OCI-LY7 (cell line): ENCODE measurements at regions of chr15 and their contacts with region 1.

Region 1: GRCh38 chr15:73972984-73973682 is 19.0 kb downstream of the STOML1 start:
- DNase-seq: peak; percentile 79
- H3K4me3 ChIP-seq: no peak overlapping the region
- H3K27ac ChIP-seq: no peak overlapping the region
- H3K4me1 ChIP-seq: no peaks in the 10 kb centered on the region
- CTCF ChIP-seq: peak; percentile 86

Region 2: DNA sequence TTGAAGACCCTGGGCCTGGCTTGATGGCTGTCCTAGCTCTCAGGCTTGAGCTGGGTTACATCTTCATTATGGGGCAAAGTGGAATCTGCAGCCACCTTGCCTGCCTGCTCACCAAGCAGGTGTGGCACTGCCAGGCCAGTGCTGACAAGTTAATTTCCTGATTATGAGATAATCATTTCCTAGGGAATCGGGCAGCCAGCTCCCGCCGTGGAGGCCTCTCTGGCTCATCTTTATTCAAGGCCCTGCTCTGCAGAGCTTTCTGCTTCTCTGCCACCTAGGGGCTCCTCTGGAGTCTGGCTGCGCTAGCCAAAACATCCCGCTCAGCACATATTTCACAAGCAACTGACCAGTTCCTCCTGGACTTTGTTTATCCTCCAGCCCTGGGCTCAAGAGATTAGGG is 37.0 kb before region 1 on chr15:
- CTCF ChIA-PET with region 1: no interaction called
- POLR2A ChIA-PET with region 1: no interaction called
- intact Hi-C with region 1: no loop called
- DNase-seq: no peak
- H3K4me3 ChIP-seq: no peak overlapping the region
- H3K27ac ChIP-seq: no peak overlapping the region
- H3K4me1 ChIP-seq: no peaks in the 10 kb centered on the region
- CTCF ChIP-seq: no peak

Region 3: GRCh38 chr15:73950831-73951561 is 22.1 kb before region 1 on chr15:
- CTCF ChIA-PET with region 1: interaction called, 10 read pairs
- POLR2A ChIA-PET with region 1: no interaction called
- intact Hi-C with region 1: no loop called
- DNase-seq: peak; percentile 71
- H3K4me3 ChIP-seq: no peak overlapping the region
- H3K27ac ChIP-seq: no peak overlapping the region
- H3K4me1 ChIP-seq: no peaks in the 10 kb centered on the region
- CTCF ChIP-seq: peak; percentile 73

Region 4: DNA sequence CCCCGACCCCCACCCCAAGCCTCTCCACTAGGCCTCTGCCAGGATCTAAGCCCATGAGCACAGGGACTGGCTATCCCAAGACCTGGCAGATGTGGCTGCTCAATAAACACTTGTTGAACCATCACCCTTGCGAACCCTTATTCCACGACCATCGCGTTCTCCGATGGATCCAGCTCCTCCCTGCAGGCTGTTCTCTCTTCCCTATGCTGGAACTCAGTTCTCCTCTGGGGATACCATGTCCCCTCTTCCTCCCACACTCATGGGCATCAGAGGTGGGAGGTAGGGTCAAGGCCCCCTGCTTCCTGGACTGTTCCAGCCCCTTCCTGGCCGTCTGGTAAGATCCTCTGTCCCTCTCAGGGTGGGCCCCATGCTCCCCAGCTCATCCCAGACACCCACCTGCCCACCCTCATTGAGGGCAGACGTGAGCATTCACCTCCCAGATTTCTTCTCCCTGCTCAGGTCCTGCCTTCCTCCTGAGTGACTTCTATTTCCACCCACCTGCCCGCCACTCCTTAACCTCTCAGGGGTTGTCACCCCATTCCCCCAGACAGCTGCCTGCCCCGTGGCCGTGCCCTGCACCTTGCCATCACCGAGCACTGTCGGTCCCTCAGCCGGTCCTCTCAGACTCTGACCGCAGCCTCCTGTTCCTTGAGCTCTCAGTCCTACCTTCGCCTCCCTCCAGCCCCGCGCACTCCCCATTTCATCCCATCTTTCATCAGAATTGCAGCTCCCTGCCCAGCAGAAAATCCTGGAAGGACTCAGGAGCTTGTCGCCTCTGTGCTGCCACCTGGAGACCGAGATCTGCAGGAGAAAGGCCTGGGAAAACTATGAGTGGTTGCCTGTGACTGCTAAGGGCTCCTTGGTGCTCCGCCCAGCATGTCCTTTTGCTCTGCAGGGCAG is 63.4 kb after region 1 on chr15:
- CTCF ChIA-PET with region 1: interaction called, 3 read pairs
- POLR2A ChIA-PET with region 1: interaction called, 3 read pairs
- intact Hi-C with region 1: loop called (anchors 1 kb)
- DNase-seq: peak; percentile 8
- H3K4me3 ChIP-seq: no peak overlapping the region
- H3K27ac ChIP-seq: no peak overlapping the region
- H3K4me1 ChIP-seq: no peaks in the 10 kb centered on the region
- CTCF ChIP-seq: peak; percentile 58

Region 5: GRCh38 chr15:74144153-74144775 is 171.1 kb after region 1 on chr15:
- CTCF ChIA-PET with region 1: interaction called, 10 read pairs
- POLR2A ChIA-PET with region 1: no interaction called
- intact Hi-C with region 1: no loop called
- DNase-seq: no peak
- H3K4me3 ChIP-seq: no peak overlapping the region
- H3K27ac ChIP-seq: no peak overlapping the region
- H3K4me1 ChIP-seq: no peaks in the 10 kb centered on the region
- CTCF ChIP-seq: no peak

Region 6: DNA sequence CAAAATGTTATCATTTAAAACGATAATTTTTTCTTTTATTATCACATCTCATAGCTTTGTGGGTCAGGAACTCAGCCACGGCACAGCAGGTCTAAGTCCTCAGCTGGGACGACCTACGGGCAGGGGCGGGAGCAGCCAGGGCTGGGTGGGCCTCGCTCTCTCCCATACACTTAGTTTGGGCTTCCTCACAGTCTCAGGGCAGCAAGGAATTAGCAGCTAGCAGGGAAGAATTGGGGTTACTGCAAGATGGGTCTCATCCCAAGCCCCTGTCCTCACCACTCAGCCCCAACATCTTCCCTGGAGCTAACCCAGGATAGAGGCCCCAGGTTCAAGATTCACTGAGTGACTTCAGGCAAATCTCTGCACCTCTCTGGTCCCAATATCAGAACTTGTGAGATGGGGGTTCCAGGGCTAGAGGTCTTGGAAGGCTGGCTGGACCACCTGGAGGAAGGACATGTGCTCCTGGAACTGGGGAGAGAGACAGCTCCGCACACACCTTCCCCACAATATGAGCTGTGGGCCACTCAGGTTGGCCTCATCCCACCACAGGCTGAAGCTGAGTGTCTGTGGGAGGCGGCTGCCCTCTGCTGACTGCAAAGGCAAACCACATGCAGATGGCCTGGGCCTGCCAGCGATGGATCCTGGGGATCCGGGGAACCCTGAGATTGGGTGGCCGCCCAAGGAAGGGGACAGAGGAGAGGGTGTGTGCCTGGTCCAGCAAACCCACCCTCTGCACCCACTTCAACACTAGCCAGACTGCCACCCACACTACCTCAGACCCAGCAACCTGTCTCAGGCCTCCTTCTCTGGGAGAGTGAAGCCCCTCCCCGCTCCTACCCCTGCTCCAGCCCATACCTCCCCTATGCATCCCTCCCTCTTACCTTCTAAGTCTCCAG is 349.3 kb after region 1 on chr15:
- CTCF ChIA-PET with region 1: no interaction called
- POLR2A ChIA-PET with region 1: no interaction called
- intact Hi-C with region 1: loop called (anchors 5 kb)
- DNase-seq: peak; percentile 66
- H3K4me3 ChIP-seq: no peak overlapping the region
- H3K27ac ChIP-seq: no peak overlapping the region
- H3K4me1 ChIP-seq: no peaks in the 10 kb centered on the region
- CTCF ChIP-seq: peak; percentile 91